ENCODE measurements at regions of chr7 and their contacts with region 1.

Region 1: DNA sequence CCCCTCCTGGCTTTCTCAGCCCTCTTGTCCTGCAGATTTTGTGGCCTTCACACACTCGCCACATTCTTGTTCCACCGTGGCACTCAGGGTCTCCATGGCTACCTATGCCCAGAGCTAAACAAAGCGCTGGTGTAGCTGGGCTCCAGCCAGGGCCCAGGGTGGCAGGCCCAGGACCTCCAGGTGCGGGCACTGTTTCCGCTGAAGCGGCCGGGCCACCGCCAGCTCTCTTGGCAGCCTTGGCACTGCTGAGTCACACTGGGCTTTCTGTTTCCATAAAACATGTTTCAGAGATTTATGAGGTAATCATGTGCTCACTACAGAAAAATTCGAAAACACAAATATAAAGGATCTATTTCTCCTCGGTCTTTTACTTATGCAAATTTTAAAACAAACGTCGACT is 51.3 kb downstream of the AOC1 start:
- DNase-seq: no peak
- H3K4me3 ChIP-seq: no peak overlapping the region
- CTCF ChIP-seq: no peak
- POLR2A ChIP-seq: no peak

Region 2: DNA sequence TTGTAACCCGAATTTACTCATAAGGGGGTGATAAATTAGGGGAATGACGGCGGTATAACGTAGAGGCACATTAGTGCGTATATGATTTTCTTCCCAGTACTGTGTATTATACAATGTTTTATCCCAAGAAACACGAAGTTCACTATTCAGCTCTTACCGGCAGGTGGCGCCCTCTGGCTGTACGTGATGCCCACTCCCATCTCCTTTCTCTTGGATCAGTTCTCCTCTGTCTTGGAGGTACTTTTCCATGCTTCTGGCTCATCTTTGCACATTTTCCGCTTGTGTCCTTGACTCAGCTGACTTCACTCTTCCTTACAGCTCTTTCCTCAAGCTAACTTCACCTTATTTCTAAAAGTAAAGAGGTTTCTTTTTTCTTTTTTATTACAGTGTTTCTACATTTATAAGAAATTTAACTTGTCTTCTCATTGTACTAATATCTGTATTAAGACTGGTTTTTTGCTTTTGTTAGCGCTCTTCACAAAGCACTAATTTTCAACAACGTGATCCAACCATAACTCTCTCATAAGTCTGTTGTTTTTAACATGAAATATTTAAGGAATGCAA is 124.8 kb before region 1 on chr7:
- intact Hi-C with region 1: no loop called
- DNase-seq: peak; percentile 81 to 97
- H3K4me3 ChIP-seq: no peak overlapping the region
- CTCF ChIP-seq: no peak
- POLR2A ChIP-seq: no peak

Region 3: DNA sequence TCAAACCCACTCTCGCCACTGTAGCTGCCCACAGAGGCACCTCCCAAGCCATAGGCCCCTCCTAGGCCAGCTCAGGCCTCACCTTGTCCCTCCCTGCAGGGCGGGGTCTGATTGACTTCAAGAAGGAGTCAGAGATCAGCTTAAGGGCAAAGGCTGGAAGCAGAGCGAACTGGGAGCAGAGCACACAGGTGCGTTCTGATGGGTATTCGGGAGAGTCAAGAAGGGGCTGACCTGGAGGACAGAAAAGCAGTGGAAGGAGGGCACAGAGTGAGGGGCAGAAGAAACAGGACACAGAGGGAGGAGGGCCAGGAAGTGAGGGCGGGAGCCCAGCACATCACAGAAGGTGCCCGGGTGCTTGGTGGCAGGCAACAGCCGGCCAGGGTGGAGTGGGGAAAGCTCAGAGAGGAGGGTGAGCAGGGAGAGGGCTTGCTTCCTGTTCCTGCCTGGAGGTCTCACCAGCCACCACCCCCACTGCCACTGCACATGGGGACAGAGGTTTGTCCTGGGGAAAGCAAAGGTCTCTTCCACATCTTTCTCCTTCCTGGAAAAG is 51.2 kb before region 1 on chr7 and contains the start of gene AOC1:
- intact Hi-C with region 1: no loop called
- DNase-seq: peak in 1 of 2 donors; percentile 71
- H3K4me3 ChIP-seq: no peak within 1 kb of the TSS
- CTCF ChIP-seq: no peak
- POLR2A ChIP-seq: no peak
- total RNA-seq, gene AOC1: 1.2 to 6.7 (median 3.5) TPM

Region 4: GRCh38 chr7:150988230-150989226 is 84.9 kb after region 1 on chr7:
- intact Hi-C with region 1: loop called (anchors 10 kb)
- DNase-seq: peak in 1 of 2 donors; percentile 92
- H3K4me3 ChIP-seq: no peak overlapping the region
- CTCF ChIP-seq: no peak
- POLR2A ChIP-seq: no peak